WTC11 (cell line): ENCODE measurements at regions of chr14 and their contacts with region 1.

Region 1: DNA sequence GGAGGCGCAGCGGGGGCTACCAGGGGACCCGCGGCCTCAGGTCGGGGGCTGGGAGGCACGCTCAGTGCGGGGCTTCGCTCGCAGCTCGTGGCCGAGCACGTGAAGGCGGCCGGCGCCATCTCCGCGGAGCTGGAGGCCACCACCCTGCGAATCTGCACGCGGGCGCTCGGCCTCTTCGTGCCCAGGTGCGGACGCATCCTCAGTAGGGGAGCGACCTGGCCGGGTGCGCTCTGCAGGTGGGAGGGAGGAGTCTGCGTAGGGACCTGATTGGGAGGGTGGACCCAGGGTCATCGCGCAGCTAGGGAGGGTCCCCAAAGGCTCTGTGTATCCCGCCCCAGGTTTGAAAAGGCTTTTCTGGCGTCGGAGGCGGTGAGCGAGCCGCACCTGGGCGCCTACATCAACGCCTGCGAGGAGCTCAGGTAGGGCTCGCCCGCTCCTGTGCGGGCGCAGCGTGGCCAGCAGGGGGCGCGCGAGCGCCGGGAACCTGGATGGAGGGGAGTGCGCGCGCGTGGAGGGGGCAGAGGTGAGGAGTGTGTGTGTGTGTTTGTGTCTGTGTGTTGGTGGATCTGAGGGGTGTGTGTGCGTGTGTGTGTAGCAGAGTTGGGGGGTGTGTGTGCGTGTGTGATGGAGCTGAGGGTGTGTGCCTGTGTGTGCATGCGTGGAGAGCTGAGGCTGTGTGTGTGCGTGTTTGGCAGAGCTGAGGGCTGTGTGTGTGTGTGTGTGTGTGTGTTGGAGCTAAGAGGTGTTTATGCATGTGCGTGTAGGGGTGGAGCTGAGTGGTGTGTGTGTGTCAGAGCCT is 10.3 kb downstream of the EXOC3L4 start:
- DNase-seq: peak; percentile 85
- ATAC-seq: peak; percentile 75
- H3K4me3 Mint-ChIP-seq: peak overlapping the region; percentile 30
- H3K27ac Mint-ChIP-seq: no peak overlapping the region
- H3K4me1 Mint-ChIP-seq: peaks cover 26% of the 10 kb centered on the region
- H3K27me3 Mint-ChIP-seq: peaks cover 54% of the 10 kb centered on the region
- CTCF ChIP-seq: peak; percentile 98

Region 2: GRCh38 chr14:102993529-102993928 is 111.3 kb before region 1 on chr14:
- CTCF ChIA-PET with region 1: no interaction called
- POLR2A ChIA-PET with region 1: no interaction called
- DNase-seq: no peak
- ATAC-seq: no peak
- H3K4me3 Mint-ChIP-seq: no peak overlapping the region
- H3K27ac Mint-ChIP-seq: peak overlapping the region; percentile 5; the same call in 1 of the 2 replicates
- H3K4me1 Mint-ChIP-seq: no peaks in the 10 kb centered on the region
- H3K27me3 Mint-ChIP-seq: no peaks in the 10 kb centered on the region
- CTCF ChIP-seq: no peak

Region 3: GRCh38 chr14:103085106-103086091 is 19.5 kb before region 1 on chr14:
- CTCF ChIA-PET with region 1: interaction called, 65 read pairs
- POLR2A ChIA-PET with region 1: no interaction called
- DNase-seq: peak; percentile 74
- ATAC-seq: peak; percentile 82
- H3K4me3 Mint-ChIP-seq: peak overlapping the region; percentile 49
- H3K27ac Mint-ChIP-seq: no peak overlapping the region
- H3K4me1 Mint-ChIP-seq: no peaks in the 10 kb centered on the region
- H3K27me3 Mint-ChIP-seq: peaks cover 14% of the 10 kb centered on the region
- CTCF ChIP-seq: no peak; the same call in 1 of the 2 replicates

Region 4: GRCh38 chr14:103121846-103122584 is 17.2 kb after region 1 on chr14:
- CTCF ChIA-PET with region 1: interaction called, 199 read pairs
- POLR2A ChIA-PET with region 1: interaction called, 3 read pairs
- DNase-seq: no peak
- ATAC-seq: peak; percentile 17
- H3K4me3 Mint-ChIP-seq: peak overlapping the region; percentile 58
- H3K27ac Mint-ChIP-seq: no peak overlapping the region
- H3K4me1 Mint-ChIP-seq: peaks cover 16% of the 10 kb centered on the region
- H3K27me3 Mint-ChIP-seq: peaks cover 26% of the 10 kb centered on the region
- CTCF ChIP-seq: no peak

Region 5: DNA sequence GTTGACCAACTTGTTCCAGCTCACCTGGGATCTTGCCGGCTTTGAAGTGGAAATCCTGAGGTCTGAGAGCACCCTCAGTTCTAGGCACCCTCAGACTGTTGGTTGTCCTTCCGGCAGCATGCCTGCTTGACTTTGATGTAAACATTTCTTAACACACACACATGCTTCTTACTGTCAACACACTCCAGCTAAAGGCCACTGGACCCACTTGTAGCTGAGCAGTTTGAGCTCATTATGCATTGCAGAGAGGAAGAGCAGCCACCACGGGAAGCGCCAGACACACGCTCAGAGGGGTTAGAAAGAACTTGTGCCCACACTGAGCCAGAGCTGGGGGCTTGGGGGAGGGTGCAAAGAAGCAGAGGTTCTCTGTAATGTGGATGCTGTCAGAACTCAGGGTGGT is 74.2 kb after region 1 on chr14:
- CTCF ChIA-PET with region 1: interaction called, 38 read pairs
- POLR2A ChIA-PET with region 1: no interaction called
- DNase-seq: no peak
- ATAC-seq: no peak
- H3K4me3 Mint-ChIP-seq: no peak overlapping the region
- H3K27ac Mint-ChIP-seq: no peak overlapping the region
- H3K4me1 Mint-ChIP-seq: no peaks in the 10 kb centered on the region
- H3K27me3 Mint-ChIP-seq: peaks cover 14% of the 10 kb centered on the region; the same call in 1 of the 2 replicates
- CTCF ChIP-seq: no peak

Region 6: DNA sequence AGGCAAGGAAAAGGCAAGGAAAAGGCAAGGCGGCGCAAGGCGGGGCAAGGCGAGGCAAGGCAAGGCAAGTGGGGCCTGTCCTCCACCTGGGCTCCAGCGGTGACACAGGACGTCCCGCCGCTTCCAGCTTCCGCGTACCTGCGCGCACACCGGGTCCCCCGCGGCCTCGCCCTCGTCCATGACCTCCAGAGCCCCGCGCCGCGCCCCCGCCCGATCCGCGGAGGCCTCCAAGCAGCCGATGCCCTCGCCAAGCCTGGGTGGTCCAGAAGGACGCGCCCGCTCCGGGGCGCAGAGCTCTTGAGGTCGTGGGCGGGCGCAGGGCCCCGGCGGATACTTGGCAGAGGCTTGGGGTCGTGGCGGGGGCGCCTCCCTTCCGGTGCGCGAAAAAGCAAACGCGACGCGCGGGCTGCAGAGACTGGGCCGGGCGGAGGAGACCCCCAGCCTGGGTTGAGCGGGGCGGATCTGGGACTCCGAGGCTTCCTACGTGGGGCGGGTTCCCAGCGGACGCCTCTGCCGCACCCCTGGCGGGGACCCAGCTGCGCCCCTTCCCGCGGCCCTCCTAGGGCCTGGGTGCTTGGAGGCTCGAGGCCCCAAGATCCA is 168.4 kb after region 1 on chr14:
- CTCF ChIA-PET with region 1: interaction called, 17 read pairs
- POLR2A ChIA-PET with region 1: no interaction called
- DNase-seq: peak; percentile 53
- ATAC-seq: peak; percentile 52
- H3K4me3 Mint-ChIP-seq: peak overlapping the region; percentile 58
- H3K27ac Mint-ChIP-seq: no peak overlapping the region
- H3K4me1 Mint-ChIP-seq: 0 out of 2 replicates have a peak, but pooled peaks cover 3% of the 10 kb centered on the region
- H3K27me3 Mint-ChIP-seq: peaks cover 65% of the 10 kb centered on the region
- CTCF ChIP-seq: no peak

Region 7: GRCh38 chr14:103298620-103299019 is 193.8 kb after region 1 on chr14:
- CTCF ChIA-PET with region 1: interaction called, 60 read pairs
- POLR2A ChIA-PET with region 1: no interaction called
- DNase-seq: no peak
- ATAC-seq: no peak
- H3K4me3 Mint-ChIP-seq: no peak overlapping the region
- H3K27ac Mint-ChIP-seq: no peak overlapping the region
- H3K4me1 Mint-ChIP-seq: no peaks in the 10 kb centered on the region
- H3K27me3 Mint-ChIP-seq: no peaks in the 10 kb centered on the region; the same call in 1 of the 2 replicates
- CTCF ChIP-seq: no peak